ENCODE measurements at regions of chr6 and their contacts with region 1.

Region 1: DNA sequence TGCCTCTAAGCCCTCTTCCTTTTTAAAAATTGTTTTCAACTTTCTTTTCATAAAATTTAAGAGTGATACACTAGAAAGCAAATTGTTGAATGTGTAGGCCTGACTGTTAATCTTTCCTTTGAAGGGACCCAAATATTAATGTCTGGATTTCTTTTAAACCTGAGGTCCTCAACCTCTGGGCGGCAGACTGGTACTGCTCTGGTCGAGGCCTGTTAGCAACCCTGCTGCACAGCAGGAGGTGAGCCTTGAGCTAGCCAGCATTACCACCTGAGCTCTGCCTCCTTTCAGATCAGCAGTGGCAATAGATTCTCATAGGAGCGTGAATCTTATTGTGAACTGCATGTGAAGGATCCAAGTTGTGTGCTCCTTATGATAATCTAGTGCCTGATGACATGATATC is 191.2 kb downstream of the MANEA start:
- DNase-seq: peak; percentile 71
- ATAC-seq: peak; percentile 92
- H3K4me3 Mint-ChIP-seq: no peak overlapping the region
- H3K27ac Mint-ChIP-seq: no peak overlapping the region
- H3K4me1 Mint-ChIP-seq: peaks cover 4% of the 10 kb centered on the region; the same call in 1 of the 2 replicates
- H3K27me3 Mint-ChIP-seq: peaks cover 4% of the 10 kb centered on the region
- CTCF ChIP-seq: no peak

Region 2: GRCh38 chr6:95741045-95741444 is 27.5 kb before region 1 on chr6:
- CTCF ChIA-PET with region 1: no interaction called
- POLR2A ChIA-PET with region 1: no interaction called
- DNase-seq: peak; percentile 7
- ATAC-seq: no peak
- H3K4me3 Mint-ChIP-seq: no peak overlapping the region
- H3K27ac Mint-ChIP-seq: no peak overlapping the region
- H3K4me1 Mint-ChIP-seq: peaks cover 5% of the 10 kb centered on the region; the same call in 1 of the 2 replicates
- H3K27me3 Mint-ChIP-seq: no peaks in the 10 kb centered on the region
- CTCF ChIP-seq: no peak

Region 3: DNA sequence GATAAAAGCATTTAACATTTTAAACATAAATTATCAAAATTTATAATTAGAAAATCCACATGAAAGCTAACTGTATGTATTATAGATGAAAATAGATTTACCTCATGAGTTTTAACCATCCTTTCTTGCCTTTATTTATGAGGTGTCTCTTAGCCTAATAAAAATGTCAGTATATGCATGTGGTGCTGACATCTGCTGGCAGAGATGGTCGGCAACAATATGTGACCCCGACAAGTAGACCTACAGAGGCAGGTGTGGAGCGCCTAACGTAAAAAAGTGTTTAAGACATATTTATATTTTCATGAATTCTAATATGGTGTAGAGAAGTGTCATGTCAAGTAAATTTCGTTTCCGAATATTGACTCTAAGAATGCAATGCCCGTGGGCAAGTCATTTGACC is 98.2 kb after region 1 on chr6:
- CTCF ChIA-PET with region 1: interaction called, 16 read pairs
- POLR2A ChIA-PET with region 1: no interaction called
- DNase-seq: peak; percentile 32
- ATAC-seq: peak; percentile 84
- H3K4me3 Mint-ChIP-seq: no peak overlapping the region
- H3K27ac Mint-ChIP-seq: no peak overlapping the region
- H3K4me1 Mint-ChIP-seq: no peaks in the 10 kb centered on the region
- H3K27me3 Mint-ChIP-seq: no peaks in the 10 kb centered on the region
- CTCF ChIP-seq: no peak